Ovary (tissue), 10 donors: ENCODE measurements at regions of chr3 and their contacts with region 1.

Region 1: DNA sequence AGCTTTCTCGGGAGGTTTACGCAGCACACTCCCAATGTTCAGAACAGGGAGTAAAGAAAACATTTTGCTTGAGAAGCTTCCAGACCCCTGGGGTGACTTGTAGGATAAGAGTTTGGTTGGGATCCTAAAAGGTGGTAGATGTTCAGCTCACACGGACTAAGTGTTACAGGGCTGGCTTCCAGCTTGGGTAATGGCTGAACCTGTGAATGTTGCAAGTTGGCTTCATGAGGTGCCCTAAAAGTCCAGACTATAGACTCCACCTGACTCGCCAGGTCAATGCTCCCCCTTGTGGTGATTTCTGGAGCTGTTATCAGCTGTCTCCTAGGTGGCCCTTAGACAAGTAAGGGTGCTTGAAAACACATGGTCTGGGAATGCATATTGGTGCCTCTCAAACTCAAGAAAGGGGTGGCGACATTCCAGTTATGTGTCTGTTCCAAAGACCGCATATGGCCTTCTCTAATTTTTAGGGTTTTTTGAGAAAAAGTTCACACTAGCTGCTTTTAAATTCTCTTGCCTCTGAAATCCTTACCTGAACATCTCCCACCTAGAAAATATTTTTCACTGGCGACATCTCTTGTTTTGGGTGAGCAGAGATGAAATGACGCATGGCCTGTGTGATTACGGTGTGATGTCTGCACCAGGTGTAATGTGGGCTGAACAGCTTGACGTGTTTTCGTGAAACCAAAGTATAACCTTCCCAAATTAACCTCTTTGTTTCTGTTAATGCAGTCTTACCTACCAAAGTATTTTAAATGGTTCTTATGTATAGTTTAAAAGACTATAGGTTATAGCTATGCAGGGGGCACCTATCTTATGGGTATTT is 175.7 kb upstream of the KBTBD8 start:
- DNase-seq: peak; percentile 36 to 62 (median 50)
- H3K4me3 ChIP-seq: no peak overlapping the region
- H3K27ac ChIP-seq: no peak overlapping the region
- H3K4me1 ChIP-seq: no peaks in the 10 kb centered on the region
- H3K27me3 ChIP-seq: no peaks in the 10 kb centered on the region
- CTCF ChIP-seq: peak; percentile 19 to 54 (median 52)
- EP300 ChIP-seq: no peak
- POLR2A ChIP-seq: no peak

Region 2: DNA sequence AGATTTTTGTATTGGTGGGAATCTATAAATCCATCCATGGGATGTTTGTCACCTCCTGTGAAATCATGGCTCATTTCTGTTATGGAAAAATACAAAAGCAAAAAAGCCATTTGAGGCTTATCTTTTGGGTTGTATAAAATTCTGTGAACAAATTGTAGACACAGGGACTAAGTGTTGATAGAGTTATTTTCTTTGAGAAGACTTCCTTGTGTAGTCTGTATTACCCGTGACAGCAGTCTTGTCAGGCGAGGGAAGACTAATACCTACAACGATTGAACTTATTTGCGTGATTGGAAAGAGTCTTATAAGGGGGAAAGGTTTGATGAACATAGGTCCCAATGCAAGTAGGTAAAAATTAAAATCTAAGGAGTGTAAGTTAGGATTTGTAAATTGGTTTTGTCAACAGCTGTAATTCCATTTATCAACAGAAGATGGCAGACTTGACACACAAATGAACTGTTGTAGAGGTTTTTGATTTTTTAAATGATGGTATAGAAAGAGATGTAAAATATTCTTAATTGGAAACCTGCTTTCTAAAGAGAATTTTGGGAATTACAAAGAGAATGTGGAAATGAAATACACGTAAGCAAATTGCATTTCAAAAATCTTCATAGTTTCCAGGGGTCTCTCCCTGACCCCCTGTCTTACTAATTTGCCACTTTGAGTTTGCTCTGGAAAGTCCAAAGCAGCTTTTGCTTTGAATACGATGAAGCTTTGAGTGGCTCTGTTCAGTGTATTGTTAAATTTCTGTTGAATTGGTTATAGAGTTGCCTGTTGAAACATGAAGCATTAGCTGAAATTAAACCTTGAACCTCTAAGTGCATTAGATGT is 568.4 kb before region 1 on chr3:
- intact Hi-C with region 1: loop called in 2 of 4 experiments (anchors 5 to 10 kb)
- DNase-seq: no peak
- H3K4me3 ChIP-seq: no peak overlapping the region
- H3K27ac ChIP-seq: no peak overlapping the region
- H3K4me1 ChIP-seq: no peaks in the 10 kb centered on the region
- H3K27me3 ChIP-seq: no peaks in the 10 kb centered on the region
- CTCF ChIP-seq: peak; percentile 33 to 53 (median 43)
- EP300 ChIP-seq: no peak
- POLR2A ChIP-seq: no peak

Region 3: GRCh38 chr3:66276705-66277274 is 545.6 kb before region 1 on chr3:
- intact Hi-C with region 1: loop called in 2 of 4 experiments (anchors 5 kb)
- DNase-seq: peak in 4 of 5 donors; percentile 39 to 73 (median 52)
- H3K4me3 ChIP-seq: no peak overlapping the region
- H3K27ac ChIP-seq: no peak overlapping the region
- H3K4me1 ChIP-seq: no peaks in the 10 kb centered on the region
- H3K27me3 ChIP-seq: no peaks in the 10 kb centered on the region
- CTCF ChIP-seq: peak; percentile 28 to 63 (median 60)
- EP300 ChIP-seq: no peak
- POLR2A ChIP-seq: no peak

Region 4: DNA sequence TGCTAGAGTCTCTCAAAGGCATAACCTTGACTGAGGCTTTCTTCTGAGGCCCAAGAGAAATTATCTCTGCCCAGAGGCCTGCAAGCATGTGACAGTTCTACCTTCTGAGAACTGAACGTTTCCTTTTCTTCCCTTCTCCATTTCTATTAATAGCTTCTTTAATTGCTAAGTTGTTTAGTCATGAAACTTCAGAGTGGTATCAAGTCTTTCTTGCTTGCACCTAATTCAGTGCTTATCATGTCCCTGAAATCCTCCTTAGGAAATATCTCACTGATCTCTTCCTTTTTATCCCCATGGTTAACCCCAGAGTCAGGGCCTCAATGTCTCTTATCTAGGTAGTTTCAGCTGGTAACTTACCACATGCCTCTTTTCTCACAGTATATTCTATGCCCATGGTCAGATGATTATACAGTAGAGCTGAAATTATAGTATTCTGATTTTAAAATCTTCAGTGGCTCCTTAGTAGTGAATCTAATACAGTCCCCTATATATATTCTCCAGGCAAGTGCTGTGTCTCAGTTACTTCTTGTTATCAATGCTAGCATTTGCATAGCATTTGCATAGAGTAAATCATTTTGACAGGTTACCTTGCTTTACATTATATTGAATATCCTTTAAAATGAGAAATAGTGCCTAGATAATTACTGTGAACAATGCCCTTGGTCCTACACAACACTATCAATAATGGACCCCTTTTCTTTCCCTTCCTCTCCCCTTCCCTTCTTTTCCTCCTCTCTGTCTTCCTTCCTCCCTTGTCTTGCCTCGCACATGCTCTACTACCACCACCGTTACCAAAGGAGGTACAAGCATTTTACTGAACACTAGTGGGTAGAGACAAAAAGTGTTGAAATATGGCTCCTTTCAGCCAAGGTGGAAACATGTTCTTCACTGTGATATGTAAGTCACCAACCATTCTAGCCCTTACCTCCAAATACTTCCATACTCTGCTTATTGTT is 208.7 kb after region 1 on chr3:
- intact Hi-C with region 1: no loop called
- DNase-seq: no peak
- H3K4me3 ChIP-seq: no peak overlapping the region
- H3K27ac ChIP-seq: no peak overlapping the region
- H3K4me1 ChIP-seq: no peaks in the 10 kb centered on the region
- H3K27me3 ChIP-seq: no peaks in the 10 kb centered on the region
- CTCF ChIP-seq: no peak
- EP300 ChIP-seq: no peak
- POLR2A ChIP-seq: no peak